Activated B cell treated with CpG ODN at 0.5 μM for 24 hours (primary cell): ENCODE measurements at regions of chr18 and their contacts with region 1.

Region 1: DNA sequence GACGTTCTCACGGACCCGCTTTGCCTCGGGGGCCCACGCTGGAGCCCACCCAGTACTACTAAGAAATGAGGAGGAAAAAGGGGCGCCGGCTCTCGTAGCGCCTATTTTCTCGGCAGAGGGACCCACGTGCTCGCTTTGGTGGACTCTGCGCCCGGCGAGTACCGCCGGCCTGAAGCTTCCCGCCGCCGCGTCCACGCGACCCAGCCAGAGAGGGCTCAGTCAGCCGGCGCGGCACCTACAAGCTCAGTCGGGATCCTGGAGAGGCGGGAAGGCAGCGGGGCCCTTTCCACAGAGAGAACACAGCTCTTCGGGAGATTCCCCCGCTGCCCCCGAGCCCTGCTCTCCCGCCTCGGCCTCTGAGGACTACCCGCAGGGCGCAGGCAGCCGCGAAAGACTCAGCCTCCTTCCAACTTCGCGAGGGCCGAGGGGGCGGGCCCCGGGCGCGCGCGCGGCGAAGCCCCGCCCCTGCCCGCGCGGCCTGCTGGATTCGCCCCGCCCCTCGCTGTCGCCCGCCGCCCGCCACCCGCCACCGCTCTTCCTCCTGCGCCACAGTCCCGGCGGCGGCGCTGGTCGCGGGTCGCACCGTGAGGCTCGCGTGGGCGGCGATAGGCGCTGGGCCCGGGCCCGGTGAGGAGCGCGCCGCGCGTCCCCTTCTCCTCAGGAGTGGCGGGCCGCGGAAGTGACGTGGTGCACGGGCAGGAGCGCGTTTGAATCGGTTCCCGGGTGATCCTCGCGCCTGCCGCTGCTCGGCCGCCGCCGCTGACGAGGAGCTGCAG is at the start of gene SMCHD1:
- DNase-seq: peak; percentile 90
- ATAC-seq: peak; percentile 74
- H3K4me3 Mint-ChIP-seq: peak within 1 kb of the TSS; percentile 96
- H3K27ac Mint-ChIP-seq: peak within 1 kb of the TSS; percentile 98
- H3K4me1 Mint-ChIP-seq: peaks cover 44% of the 10 kb centered on the region
- H3K27me3 Mint-ChIP-seq: no peaks in the 10 kb centered on the region
- CTCF ChIP-seq: no peak
- total RNA-seq, gene SMCHD1: 111 and 144 TPM in 2 replicates

Region 2: GRCh38 chr18:839224-840022 is 1815.9 kb before region 1 on chr18:
- CTCF ChIA-PET with region 1: no interaction called
- POLR2A ChIA-PET with region 1: no interaction called
- intact Hi-C with region 1: no loop called
- DNase-seq: peak; percentile 70
- ATAC-seq: peak; percentile 87
- H3K4me3 Mint-ChIP-seq: no peak overlapping the region
- H3K27ac Mint-ChIP-seq: no peak overlapping the region
- H3K4me1 Mint-ChIP-seq: no peaks in the 10 kb centered on the region
- H3K27me3 Mint-ChIP-seq: peaks cover 9% of the 10 kb centered on the region
- CTCF ChIP-seq: peak; percentile 31

Region 3: DNA sequence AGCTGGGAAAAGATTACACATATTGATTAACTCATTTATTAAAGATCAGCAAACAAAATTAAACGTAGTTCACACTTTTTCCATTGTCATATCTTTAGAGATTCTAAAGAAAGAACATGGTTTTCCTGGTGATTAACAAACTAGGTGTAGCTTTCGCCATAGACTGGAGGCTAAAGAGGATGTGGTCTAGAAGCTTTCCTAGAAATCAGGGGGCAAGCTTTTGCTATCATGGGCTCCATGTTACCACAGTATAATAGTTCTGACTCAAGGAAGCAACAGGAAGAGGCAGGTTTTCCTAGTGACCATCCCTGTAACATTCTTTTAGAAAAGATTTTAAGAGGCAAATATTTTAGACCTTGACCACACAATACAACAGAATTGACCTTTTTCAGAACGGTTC is 316.8 kb before region 1 on chr18:
- CTCF ChIA-PET with region 1: no interaction called
- POLR2A ChIA-PET with region 1: no interaction called
- intact Hi-C with region 1: no loop called
- DNase-seq: no peak
- ATAC-seq: no peak
- H3K4me3 Mint-ChIP-seq: no peak overlapping the region
- H3K27ac Mint-ChIP-seq: no peak overlapping the region
- H3K4me1 Mint-ChIP-seq: no peaks in the 10 kb centered on the region
- H3K27me3 Mint-ChIP-seq: peaks cover 23% of the 10 kb centered on the region
- CTCF ChIP-seq: no peak

Region 4: GRCh38 chr18:2571200-2572143 is 83.9 kb before region 1 on chr18 and contains the starts of genes METTL4 and NDC80:
- CTCF ChIA-PET with region 1: interaction called, 18 read pairs
- POLR2A ChIA-PET with region 1: interaction called, 105 read pairs
- intact Hi-C with region 1: loop called (anchors 1 kb)
- DNase-seq: peak; percentile 82
- ATAC-seq: peak; percentile 93
- H3K4me3 Mint-ChIP-seq: peak within 1 kb of the TSS; percentile 100
- H3K27ac Mint-ChIP-seq: peak within 1 kb of the TSS; percentile 99
- H3K4me1 Mint-ChIP-seq: peaks cover 50% of the 10 kb centered on the region
- H3K27me3 Mint-ChIP-seq: no peaks in the 10 kb centered on the region
- CTCF ChIP-seq: no peak
- total RNA-seq, gene METTL4: 17.4 TPM in 2 replicates
- total RNA-seq, gene NDC80: 1.9 and 2.6 TPM in 2 replicates

Region 5: GRCh38 chr18:2606335-2606734 is 49.0 kb before region 1 on chr18:
- CTCF ChIA-PET with region 1: interaction called, 11 read pairs
- POLR2A ChIA-PET with region 1: interaction called, 57 read pairs
- intact Hi-C with region 1: loop called (anchors 1 kb)
- DNase-seq: no peak
- ATAC-seq: no peak
- H3K4me3 Mint-ChIP-seq: peak overlapping the region; percentile 24
- H3K27ac Mint-ChIP-seq: peak overlapping the region; percentile 83
- H3K4me1 Mint-ChIP-seq: peaks cover 31% of the 10 kb centered on the region
- H3K27me3 Mint-ChIP-seq: no peaks in the 10 kb centered on the region
- CTCF ChIP-seq: no peak

Region 6: GRCh38 chr18:2641638-2642037 is 13.7 kb before region 1 on chr18:
- CTCF ChIA-PET with region 1: interaction called, 10 read pairs
- POLR2A ChIA-PET with region 1: interaction called, 376 read pairs
- intact Hi-C with region 1: loop called (anchors 1 kb)
- DNase-seq: no peak
- ATAC-seq: peak; percentile 59
- H3K4me3 Mint-ChIP-seq: peak overlapping the region; percentile 77
- H3K27ac Mint-ChIP-seq: no peak overlapping the region
- H3K4me1 Mint-ChIP-seq: peaks cover 54% of the 10 kb centered on the region
- H3K27me3 Mint-ChIP-seq: no peaks in the 10 kb centered on the region
- CTCF ChIP-seq: no peak

Region 7: GRCh38 chr18:2680216-2680792 is 24.9 kb after region 1 on chr18:
- CTCF ChIA-PET with region 1: no interaction called
- POLR2A ChIA-PET with region 1: interaction called, 20 read pairs
- intact Hi-C with region 1: no loop called
- DNase-seq: no peak
- ATAC-seq: no peak
- H3K4me3 Mint-ChIP-seq: no peak overlapping the region
- H3K27ac Mint-ChIP-seq: peak overlapping the region; percentile 47
- H3K4me1 Mint-ChIP-seq: peaks cover 35% of the 10 kb centered on the region
- H3K27me3 Mint-ChIP-seq: no peaks in the 10 kb centered on the region
- CTCF ChIP-seq: no peak

Region 8: DNA sequence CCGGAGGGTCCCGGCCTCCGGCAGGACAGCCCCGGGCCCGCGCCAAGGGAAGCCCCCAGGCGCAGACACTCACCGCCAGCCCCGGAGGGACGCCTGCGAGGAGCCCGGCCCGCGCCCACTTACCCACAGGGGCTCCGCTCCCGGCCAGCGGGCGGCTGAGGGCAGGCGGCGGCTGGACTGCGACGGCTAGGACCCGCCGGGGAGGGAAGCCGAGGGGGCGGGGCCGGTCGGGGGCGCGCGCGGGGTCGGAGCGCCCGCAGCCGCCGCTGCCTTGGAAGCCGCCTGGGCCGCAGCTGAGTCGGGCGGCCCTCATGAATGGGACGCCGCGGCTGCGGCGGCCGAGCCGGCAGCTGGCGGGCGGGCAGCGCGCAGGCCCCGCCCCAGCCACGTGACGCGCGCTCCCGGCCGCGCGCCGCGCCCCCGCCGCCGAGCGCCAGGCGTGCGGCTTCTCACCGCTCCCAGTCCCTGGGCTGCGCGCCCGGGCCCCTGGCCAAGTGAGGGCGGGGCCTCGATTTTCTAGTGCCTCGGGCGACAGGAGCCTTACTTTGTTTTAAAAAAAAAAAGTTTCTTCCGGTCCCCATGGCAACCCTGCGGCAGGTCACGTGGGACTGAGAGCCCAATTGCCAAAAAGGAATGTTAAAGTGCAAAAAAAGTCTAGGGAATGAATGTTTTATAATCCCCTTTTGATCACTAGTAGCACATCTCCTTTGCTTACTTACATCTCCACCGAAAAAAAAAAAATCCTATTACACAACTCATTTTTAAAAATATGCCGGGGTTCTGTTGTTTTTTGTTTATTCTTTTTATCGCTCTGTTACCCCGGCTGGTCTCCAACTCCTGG is 357.8 kb after region 1 on chr18 and contains the start of gene LPIN2:
- CTCF ChIA-PET with region 1: no interaction called
- POLR2A ChIA-PET with region 1: interaction called, 6 read pairs
- intact Hi-C with region 1: loop called (anchors 10 kb)
- DNase-seq: peak; percentile 91
- ATAC-seq: peak; percentile 86
- H3K4me3 Mint-ChIP-seq: peak within 1 kb of the TSS; percentile 95
- H3K27ac Mint-ChIP-seq: peak within 1 kb of the TSS; percentile 88
- H3K4me1 Mint-ChIP-seq: peaks cover 59% of the 10 kb centered on the region
- H3K27me3 Mint-ChIP-seq: no peaks in the 10 kb centered on the region
- CTCF ChIP-seq: no peak
- total RNA-seq, gene LPIN2: 21.8 and 24.4 TPM in 2 replicates